MCF 10A (cell line): ENCODE measurements at regions of chr9 and their contacts with region 1.

Region 1: DNA sequence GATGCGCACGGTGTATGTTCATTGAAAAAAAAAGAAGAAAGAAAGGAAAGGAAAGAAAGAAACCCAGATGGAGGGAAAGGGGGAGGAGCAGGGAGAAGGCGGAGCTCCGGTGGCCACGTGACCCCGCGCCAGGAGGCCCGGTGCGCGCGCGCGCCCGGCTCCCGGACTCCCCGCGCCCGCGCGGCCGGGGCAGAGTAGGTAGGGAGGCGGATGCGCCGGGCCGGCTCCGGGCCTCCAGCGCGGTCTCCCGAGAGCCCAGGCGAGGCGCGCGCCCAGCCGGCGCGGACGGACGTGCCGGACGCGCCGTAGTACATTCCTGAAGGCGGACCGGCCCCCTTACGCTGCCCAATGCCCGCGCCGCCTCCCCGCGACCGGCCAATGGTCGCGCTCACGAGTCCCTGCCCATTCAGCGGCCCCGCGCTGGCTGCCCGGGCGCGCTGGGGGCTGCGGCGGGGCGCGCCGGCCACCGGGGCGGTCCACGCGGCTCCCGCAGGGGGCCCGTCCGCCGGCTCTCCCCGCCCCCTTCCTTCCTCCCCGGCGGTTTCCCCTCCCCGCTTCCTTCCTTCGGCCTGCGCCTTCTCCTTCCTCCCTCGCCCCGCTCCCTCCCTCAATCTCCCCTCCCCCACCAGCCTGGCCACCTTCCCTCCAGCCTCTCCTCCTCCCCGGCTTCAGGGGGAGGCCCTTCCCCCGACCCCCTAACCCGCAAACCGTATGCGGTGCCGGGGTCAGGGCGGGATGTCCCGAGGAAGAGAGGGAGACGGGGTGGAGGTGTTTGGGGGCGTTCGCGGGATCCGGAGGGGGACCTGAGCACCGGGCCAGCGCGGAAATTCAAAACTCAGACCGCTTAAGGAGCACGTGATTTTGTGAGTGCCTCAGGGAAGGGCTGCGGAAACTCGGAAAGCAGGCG is 5.8 kb downstream of the PTCH1 start:
- DNase-seq: peak; percentile 90
- H3K4me3 Mint-ChIP-seq: peak overlapping the region; percentile 79
- H3K27ac Mint-ChIP-seq: peak overlapping the region; percentile 91
- H3K4me1 Mint-ChIP-seq: peaks cover 7% of the 10 kb centered on the region
- H3K27me3 Mint-ChIP-seq: no peaks in the 10 kb centered on the region
- CTCF ChIP-seq: no peak

Region 2: GRCh38 chr9:95189251-95190098 is 321.5 kb before region 1 on chr9:
- CTCF ChIA-PET with region 1: no interaction called
- POLR2A ChIA-PET with region 1: no interaction called
- intact Hi-C with region 1: loop called (anchors 10 kb)
- DNase-seq: no peak
- H3K4me3 Mint-ChIP-seq: no peak overlapping the region
- H3K27ac Mint-ChIP-seq: no peak overlapping the region
- H3K4me1 Mint-ChIP-seq: no peaks in the 10 kb centered on the region
- H3K27me3 Mint-ChIP-seq: no peaks in the 10 kb centered on the region
- CTCF ChIP-seq: no peak

Region 3: DNA sequence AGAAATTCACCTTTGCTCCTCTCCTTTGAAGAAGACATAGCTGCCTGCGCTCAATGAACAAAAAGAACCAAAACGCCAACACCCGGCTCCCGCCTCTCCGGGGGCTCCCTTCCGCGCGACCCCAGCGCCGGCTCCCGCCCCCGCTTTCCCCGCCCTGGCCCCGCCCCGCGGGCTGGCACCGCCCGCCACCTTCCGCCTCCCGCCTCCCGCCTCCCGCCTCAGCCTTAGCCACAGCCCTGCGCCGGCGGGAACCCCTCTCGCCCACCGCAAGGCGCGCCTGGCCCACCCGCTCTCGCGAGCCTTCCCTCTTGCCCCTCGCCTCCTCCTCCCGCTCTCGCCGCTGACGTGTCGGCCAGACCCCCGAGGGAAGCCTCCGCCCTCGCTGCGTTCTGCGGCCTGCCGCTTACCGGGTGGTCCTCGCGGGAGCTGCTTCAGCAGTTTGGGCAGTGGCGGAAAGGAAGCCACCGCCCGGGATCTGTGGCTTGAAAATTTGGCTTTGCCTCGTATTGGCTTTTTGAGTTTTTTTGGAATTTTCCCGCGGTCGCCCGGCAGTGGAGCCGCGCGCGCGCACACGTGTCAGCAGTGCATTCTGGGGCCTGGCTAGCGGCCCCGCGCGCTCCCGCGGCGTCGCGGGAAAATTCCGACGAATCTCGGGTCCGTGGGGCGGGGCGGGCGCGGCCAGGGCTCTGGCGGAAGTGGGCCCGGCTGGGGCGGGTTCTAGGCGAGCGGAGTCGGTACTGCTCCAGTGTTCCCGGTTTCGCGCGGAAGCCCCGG is 193.7 kb before region 1 on chr9 and contains the start of gene FANCC:
- CTCF ChIA-PET with region 1: no interaction called
- POLR2A ChIA-PET with region 1: interaction called, 4 read pairs
- intact Hi-C with region 1: loop called (anchors 2 kb)
- DNase-seq: peak; percentile 80
- H3K4me3 Mint-ChIP-seq: peak within 1 kb of the TSS; percentile 86
- H3K27ac Mint-ChIP-seq: peak within 1 kb of the TSS; percentile 95
- H3K4me1 Mint-ChIP-seq: peaks cover 14% of the 10 kb centered on the region
- H3K27me3 Mint-ChIP-seq: no peaks in the 10 kb centered on the region
- CTCF ChIP-seq: no peak
- total RNA-seq, gene FANCC: 9.6 and 12.1 TPM in 2 replicates

Region 4: DNA sequence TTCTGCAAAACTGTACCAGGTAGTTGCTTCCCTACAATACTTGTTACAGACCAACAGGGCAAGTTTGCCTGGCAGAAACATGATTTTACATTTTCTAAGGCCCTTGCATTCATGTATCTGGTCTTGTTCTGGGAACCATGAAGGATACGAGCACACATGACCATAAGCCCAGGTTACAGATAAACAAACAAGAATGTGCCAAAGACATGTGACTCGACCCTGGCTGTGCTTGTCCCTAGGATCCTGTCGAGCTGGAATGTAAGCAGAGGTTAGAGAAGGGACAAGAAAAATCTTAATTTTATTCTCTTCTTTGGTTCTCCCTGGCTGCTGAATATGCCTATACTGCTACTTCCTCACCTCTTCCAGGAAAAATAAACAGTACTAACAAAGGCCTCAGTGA is 26.7 kb before region 1 on chr9:
- CTCF ChIA-PET with region 1: no interaction called
- POLR2A ChIA-PET with region 1: no interaction called
- intact Hi-C with region 1: no loop called
- DNase-seq: no peak
- H3K4me3 Mint-ChIP-seq: no peak overlapping the region
- H3K27ac Mint-ChIP-seq: no peak overlapping the region
- H3K4me1 Mint-ChIP-seq: no peaks in the 10 kb centered on the region
- H3K27me3 Mint-ChIP-seq: no peaks in the 10 kb centered on the region
- CTCF ChIP-seq: no peak

Region 5: DNA sequence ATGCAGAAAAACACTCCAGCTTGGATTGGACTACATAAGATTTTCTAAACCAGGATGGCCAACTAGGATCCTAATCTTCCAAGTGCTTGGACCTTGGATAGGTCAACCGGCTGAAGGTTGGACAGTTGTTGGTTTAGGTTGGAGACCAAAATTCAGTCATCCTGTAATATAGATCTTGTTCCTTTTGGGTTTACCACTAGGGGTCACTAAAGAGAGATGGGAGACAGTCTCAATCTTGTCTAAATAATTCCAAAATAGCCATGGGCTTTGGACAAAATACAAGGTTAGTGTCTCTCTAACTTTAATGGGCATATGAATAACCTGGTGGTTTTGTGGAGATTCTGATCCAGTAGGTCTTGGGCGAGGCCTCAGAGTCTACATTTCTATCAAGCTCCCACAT is 215.8 kb after region 1 on chr9:
- CTCF ChIA-PET with region 1: no interaction called
- POLR2A ChIA-PET with region 1: no interaction called
- intact Hi-C with region 1: loop called (anchors 10 kb)
- DNase-seq: peak; percentile 67
- H3K4me3 Mint-ChIP-seq: no peak overlapping the region
- H3K27ac Mint-ChIP-seq: no peak overlapping the region
- H3K4me1 Mint-ChIP-seq: no peaks in the 10 kb centered on the region
- H3K27me3 Mint-ChIP-seq: no peaks in the 10 kb centered on the region
- CTCF ChIP-seq: peak; percentile 62

Region 6: GRCh38 chr9:96217754-96218693 is 707.1 kb after region 1 on chr9:
- CTCF ChIA-PET with region 1: interaction called, 7 read pairs
- POLR2A ChIA-PET with region 1: interaction called, 4 read pairs
- intact Hi-C with region 1: loop called (anchors 5 kb)
- DNase-seq: peak; percentile 64
- H3K4me3 Mint-ChIP-seq: peak overlapping the region; percentile 38
- H3K27ac Mint-ChIP-seq: no peak overlapping the region
- H3K4me1 Mint-ChIP-seq: peaks cover 4% of the 10 kb centered on the region
- H3K27me3 Mint-ChIP-seq: peaks cover 63% of the 10 kb centered on the region
- CTCF ChIP-seq: peak; percentile 98